Activated CD8-positive, alpha-beta memory T cell treated with anti-CD3 and anti-CD28 coated beads, Interleukin-2, amount 10 ng/mL, durations not matched to agents 7 days and 5 days (primary cell): ENCODE measurements at regions of chr11 and their contacts with region 1.

Region 1: GRCh38 chr11:107689317-107690202 is 22.3 kb downstream of the SLN start:
- DNase-seq: peak; percentile 67
- ATAC-seq: peak; percentile 76
- H3K4me3 Mint-ChIP-seq: no peak overlapping the region
- H3K27ac Mint-ChIP-seq: no peak overlapping the region
- H3K4me1 Mint-ChIP-seq: no peaks in the 10 kb centered on the region
- H3K27me3 Mint-ChIP-seq: peaks cover 20% of the 10 kb centered on the region

Region 2: GRCh38 chr11:107549253-107549953 is 140.2 kb before region 1 on chr11:
- CTCF ChIA-PET with region 1: interaction called, 42 read pairs
- DNase-seq: peak; percentile 43
- ATAC-seq: peak; percentile 36
- H3K4me3 Mint-ChIP-seq: no peak overlapping the region
- H3K27ac Mint-ChIP-seq: no peak overlapping the region
- H3K4me1 Mint-ChIP-seq: no peaks in the 10 kb centered on the region
- H3K27me3 Mint-ChIP-seq: no peaks in the 10 kb centered on the region

Region 3: DNA sequence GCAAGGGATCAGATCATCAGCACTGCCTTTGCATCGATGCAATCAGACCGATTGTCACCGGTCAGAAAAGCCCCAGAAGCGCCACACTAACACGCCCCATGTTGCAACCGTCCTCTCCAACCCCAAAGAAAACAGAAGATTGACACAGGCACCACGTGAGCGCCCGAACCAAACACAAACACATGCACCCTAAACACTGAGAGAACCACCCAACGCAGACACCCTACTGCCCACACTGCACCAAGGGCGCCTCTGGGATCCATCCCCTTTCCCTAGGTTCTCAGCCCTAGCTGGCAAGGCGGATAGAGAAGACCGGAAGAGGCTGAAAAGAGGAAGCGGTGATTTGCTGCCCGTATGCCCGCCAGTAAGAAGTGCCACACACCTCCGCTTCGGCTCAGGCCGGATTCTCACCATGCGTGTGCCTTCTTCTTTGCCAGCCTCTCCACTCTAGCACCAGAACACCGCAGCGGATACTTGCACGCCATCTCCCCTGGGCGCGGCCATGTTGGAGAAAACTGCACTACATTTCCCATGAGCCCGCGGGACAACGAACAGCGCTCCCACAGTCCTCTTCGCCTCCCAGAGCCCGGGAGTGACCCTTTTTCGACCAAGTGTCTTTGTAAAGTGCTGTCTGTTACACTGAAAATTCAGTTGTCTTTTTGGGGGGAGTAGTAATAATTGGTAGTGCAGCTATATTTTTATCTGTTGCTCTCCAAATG is 124.2 kb before region 1 on chr11 and contains the start of gene ALKBH8:
- CTCF ChIA-PET with region 1: interaction called, 13 read pairs
- DNase-seq: peak; percentile 89
- ATAC-seq: peak; percentile 95
- H3K4me3 Mint-ChIP-seq: peak within 1 kb of the TSS; percentile 92
- H3K27ac Mint-ChIP-seq: peak within 1 kb of the TSS; percentile 95
- H3K4me1 Mint-ChIP-seq: peaks cover 52% of the 10 kb centered on the region
- H3K27me3 Mint-ChIP-seq: no peaks in the 10 kb centered on the region
- total RNA-seq, gene ALKBH8: 8.6 to 11.2 TPM

Region 4: GRCh38 chr11:107573438-107573837 is 116.1 kb before region 1 on chr11:
- CTCF ChIA-PET with region 1: interaction called, 27 read pairs
- DNase-seq: no peak
- ATAC-seq: no peak
- H3K4me3 Mint-ChIP-seq: no peak overlapping the region
- H3K27ac Mint-ChIP-seq: no peak overlapping the region
- H3K4me1 Mint-ChIP-seq: no peaks in the 10 kb centered on the region
- H3K27me3 Mint-ChIP-seq: peaks cover 7% of the 10 kb centered on the region

Region 5: DNA sequence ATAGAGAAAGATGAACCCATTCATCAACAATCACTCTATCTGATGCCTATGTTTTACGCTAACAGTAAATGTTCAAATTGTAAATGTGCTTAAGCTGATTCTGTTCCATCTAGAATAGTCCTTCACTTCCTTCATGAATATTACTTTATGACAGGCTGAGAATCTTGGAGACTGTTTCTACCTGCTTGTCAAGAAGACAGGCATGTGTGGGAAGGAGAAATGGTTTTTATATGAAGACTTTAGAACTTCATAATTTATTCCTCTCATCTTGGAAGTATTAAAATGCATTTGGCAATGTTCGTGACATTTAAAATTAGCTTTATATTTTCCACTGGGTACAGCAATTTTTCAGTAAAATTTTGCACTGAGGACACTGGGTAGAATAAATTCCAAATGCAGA is 57.6 kb before region 1 on chr11:
- CTCF ChIA-PET with region 1: no interaction called
- DNase-seq: no peak
- ATAC-seq: no peak
- H3K4me3 Mint-ChIP-seq: no peak overlapping the region
- H3K27ac Mint-ChIP-seq: no peak overlapping the region
- H3K4me1 Mint-ChIP-seq: no peaks in the 10 kb centered on the region
- H3K27me3 Mint-ChIP-seq: peaks cover 51% of the 10 kb centered on the region

Region 6: GRCh38 chr11:107705027-107705426 is 15.5 kb after region 1 on chr11:
- CTCF ChIA-PET with region 1: no interaction called
- DNase-seq: no peak
- ATAC-seq: no peak
- H3K4me3 Mint-ChIP-seq: no peak overlapping the region
- H3K27ac Mint-ChIP-seq: no peak overlapping the region
- H3K4me1 Mint-ChIP-seq: no peaks in the 10 kb centered on the region
- H3K27me3 Mint-ChIP-seq: peaks cover 39% of the 10 kb centered on the region

Region 7: GRCh38 chr11:107757661-107758060 is 68.1 kb after region 1 on chr11:
- CTCF ChIA-PET with region 1: no interaction called
- DNase-seq: no peak
- ATAC-seq: no peak
- H3K4me3 Mint-ChIP-seq: no peak overlapping the region
- H3K27ac Mint-ChIP-seq: no peak overlapping the region
- H3K4me1 Mint-ChIP-seq: no peaks in the 10 kb centered on the region
- H3K27me3 Mint-ChIP-seq: peaks cover 11% of the 10 kb centered on the region